Activated B cell treated with CpG ODN at 0.5 μM for 24 hours (primary cell): ENCODE measurements at regions of chr15 and their contacts with region 1.

Region 1: GRCh38 chr15:78195735-78196201 is 38.6 kb downstream of the ACSBG1 start:
- DNase-seq: peak; percentile 59
- ATAC-seq: peak; percentile 90
- H3K4me3 Mint-ChIP-seq: no peak overlapping the region
- H3K27ac Mint-ChIP-seq: no peak overlapping the region
- H3K4me1 Mint-ChIP-seq: no peaks in the 10 kb centered on the region
- H3K27me3 Mint-ChIP-seq: no peaks in the 10 kb centered on the region
- CTCF ChIP-seq: peak; percentile 23

Region 2: DNA sequence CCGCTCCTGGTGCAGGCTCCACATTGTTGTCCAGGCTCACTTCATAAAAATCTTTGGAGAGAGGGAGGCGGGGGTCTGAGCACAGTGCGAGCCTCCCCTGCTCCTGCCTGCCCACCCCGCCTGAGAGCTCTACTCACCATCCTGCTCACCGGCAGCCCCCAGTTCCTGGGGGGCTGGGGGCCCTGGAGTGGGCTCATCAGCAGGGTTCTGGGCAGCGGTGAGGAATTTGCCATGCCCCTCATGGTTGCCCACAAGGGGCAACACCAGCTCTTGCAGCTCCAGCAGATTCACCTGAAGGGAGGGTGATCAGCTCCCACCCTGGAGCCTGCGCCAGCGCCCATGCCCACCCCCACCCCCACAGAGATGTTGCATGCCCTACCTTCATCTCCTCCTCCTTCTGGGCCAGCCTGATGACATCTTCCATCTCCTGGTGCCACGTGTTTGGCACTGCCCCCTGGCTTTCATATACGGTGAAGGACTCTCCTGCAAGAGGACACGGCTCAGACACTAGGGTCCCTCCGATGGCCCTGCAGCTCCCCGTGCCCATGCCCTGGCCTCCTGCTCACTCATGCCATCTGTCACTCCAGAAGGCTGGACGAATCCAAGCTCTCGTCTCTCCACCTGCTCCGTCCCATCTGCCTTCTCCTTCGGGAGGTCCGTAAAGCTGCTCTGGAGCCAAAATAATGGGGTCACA is 280.4 kb before region 1 on chr15:
- CTCF ChIA-PET with region 1: no interaction called
- POLR2A ChIA-PET with region 1: no interaction called
- intact Hi-C with region 1: no loop called
- DNase-seq: no peak
- ATAC-seq: no peak
- H3K4me3 Mint-ChIP-seq: no peak overlapping the region
- H3K27ac Mint-ChIP-seq: no peak overlapping the region
- H3K4me1 Mint-ChIP-seq: no peaks in the 10 kb centered on the region
- H3K27me3 Mint-ChIP-seq: peaks cover 9% of the 10 kb centered on the region
- CTCF ChIP-seq: no peak

Region 3: DNA sequence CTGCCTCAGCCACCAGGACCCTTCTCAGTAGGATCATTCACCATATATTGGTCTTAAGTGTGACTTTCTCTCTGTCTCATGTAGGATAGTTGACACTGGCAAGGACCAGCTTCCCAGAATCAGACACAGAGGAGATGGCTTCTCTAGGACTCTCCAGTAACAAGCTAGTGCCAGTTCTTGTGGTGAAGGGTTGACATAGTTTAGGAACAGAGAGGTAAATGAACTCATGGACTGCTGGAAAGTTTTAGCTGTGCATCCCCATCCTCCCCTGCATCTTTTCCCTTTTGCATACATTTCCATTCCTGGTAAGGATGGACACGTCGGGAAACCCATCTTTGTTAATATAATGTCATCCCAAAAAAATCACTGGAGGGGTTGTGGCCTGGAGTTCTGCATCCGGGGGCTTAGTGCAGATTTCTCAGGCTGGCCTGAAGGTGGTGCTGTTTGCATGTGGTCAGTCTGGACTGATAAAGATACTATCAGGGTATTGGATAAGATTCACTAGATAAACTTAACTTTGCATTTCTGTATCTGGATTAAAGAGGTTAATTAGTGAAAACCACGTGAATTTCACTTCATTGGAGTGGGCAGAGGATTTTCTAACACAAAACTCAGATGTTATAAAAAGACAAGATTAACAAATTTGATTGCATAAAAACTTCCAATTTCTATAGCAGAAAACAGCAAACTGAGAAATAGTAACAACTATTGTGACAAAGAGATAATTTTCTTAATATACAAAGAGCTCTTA is 229.1 kb before region 1 on chr15:
- CTCF ChIA-PET with region 1: interaction called, 4 read pairs
- POLR2A ChIA-PET with region 1: no interaction called
- intact Hi-C with region 1: loop called (anchors 1 kb)
- DNase-seq: no peak
- ATAC-seq: peak; percentile 77
- H3K4me3 Mint-ChIP-seq: no peak overlapping the region
- H3K27ac Mint-ChIP-seq: no peak overlapping the region
- H3K4me1 Mint-ChIP-seq: no peaks in the 10 kb centered on the region
- H3K27me3 Mint-ChIP-seq: peaks cover 8% of the 10 kb centered on the region
- CTCF ChIP-seq: peak; percentile 83

Region 4: GRCh38 chr15:78007911-78008886 is 187.6 kb before region 1 on chr15:
- CTCF ChIA-PET with region 1: no interaction called
- POLR2A ChIA-PET with region 1: no interaction called
- intact Hi-C with region 1: no loop called
- DNase-seq: no peak
- ATAC-seq: no peak
- H3K4me3 Mint-ChIP-seq: no peak overlapping the region
- H3K27ac Mint-ChIP-seq: no peak overlapping the region
- H3K4me1 Mint-ChIP-seq: peaks cover 5% of the 10 kb centered on the region
- H3K27me3 Mint-ChIP-seq: no peaks in the 10 kb centered on the region
- CTCF ChIP-seq: no peak

Region 5: GRCh38 chr15:78131295-78132061 is 64.3 kb before region 1 on chr15 and contains the start of gene CIB2:
- CTCF ChIA-PET with region 1: interaction called, 202 read pairs
- POLR2A ChIA-PET with region 1: interaction called, 28 read pairs
- intact Hi-C with region 1: loop called (anchors 1 kb)
- DNase-seq: peak; percentile 88
- ATAC-seq: peak; percentile 96
- H3K4me3 Mint-ChIP-seq: peak within 1 kb of the TSS; percentile 84
- H3K27ac Mint-ChIP-seq: peak within 1 kb of the TSS; percentile 66
- H3K4me1 Mint-ChIP-seq: peaks cover 16% of the 10 kb centered on the region
- H3K27me3 Mint-ChIP-seq: no peaks in the 10 kb centered on the region
- CTCF ChIP-seq: no peak
- total RNA-seq, gene CIB2: 3.5 and 3.7 TPM in 2 replicates

Region 6: DNA sequence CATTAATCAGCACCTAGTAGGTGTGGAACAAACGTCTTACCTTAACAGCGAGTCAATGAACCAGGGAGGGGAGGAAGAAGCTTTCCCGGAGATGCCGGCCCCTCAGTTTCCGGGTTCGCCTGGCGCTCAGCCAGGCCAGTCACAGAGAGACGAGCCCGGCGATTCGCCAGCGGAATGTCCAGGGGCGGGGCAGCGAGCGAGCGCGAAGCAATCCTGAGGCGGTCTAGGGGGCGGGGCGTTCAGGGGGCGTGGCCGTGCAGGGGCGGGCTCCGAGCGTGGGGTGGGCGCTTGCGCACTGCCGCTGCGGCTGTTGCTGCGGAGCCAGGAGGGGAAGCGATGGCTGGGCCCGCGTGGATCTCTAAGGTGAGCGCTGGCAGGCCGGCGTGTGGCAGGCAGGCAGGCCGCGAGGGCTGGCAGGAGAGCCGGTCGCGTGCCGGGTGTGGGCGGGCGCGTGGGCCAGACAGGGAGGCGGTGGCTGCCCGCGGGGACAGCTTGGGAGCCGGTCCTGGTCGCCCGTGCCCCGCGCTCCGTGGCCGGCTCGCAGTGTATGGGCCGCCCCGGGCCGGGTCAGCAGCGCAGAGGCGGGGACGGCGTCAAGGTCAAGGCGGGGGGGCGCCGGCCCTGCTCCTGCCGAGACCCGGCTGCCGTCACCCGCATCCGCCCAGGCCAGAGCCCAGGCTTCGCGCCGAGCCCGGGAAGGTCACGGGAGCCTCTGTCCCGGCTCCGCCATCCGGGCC is 46.5 kb before region 1 on chr15 and contains the start of gene IDH3A:
- CTCF ChIA-PET with region 1: interaction called, 18 read pairs
- POLR2A ChIA-PET with region 1: interaction called, 13 read pairs
- intact Hi-C with region 1: loop called (anchors 1 kb)
- DNase-seq: peak; percentile 99
- ATAC-seq: peak; percentile 97
- H3K4me3 Mint-ChIP-seq: peak within 1 kb of the TSS; percentile 94
- H3K27ac Mint-ChIP-seq: peak within 1 kb of the TSS; percentile 91
- H3K4me1 Mint-ChIP-seq: peaks cover 46% of the 10 kb centered on the region
- H3K27me3 Mint-ChIP-seq: no peaks in the 10 kb centered on the region
- CTCF ChIP-seq: no peak
- total RNA-seq, gene IDH3A: 111 and 124 TPM in 2 replicates

Region 7: DNA sequence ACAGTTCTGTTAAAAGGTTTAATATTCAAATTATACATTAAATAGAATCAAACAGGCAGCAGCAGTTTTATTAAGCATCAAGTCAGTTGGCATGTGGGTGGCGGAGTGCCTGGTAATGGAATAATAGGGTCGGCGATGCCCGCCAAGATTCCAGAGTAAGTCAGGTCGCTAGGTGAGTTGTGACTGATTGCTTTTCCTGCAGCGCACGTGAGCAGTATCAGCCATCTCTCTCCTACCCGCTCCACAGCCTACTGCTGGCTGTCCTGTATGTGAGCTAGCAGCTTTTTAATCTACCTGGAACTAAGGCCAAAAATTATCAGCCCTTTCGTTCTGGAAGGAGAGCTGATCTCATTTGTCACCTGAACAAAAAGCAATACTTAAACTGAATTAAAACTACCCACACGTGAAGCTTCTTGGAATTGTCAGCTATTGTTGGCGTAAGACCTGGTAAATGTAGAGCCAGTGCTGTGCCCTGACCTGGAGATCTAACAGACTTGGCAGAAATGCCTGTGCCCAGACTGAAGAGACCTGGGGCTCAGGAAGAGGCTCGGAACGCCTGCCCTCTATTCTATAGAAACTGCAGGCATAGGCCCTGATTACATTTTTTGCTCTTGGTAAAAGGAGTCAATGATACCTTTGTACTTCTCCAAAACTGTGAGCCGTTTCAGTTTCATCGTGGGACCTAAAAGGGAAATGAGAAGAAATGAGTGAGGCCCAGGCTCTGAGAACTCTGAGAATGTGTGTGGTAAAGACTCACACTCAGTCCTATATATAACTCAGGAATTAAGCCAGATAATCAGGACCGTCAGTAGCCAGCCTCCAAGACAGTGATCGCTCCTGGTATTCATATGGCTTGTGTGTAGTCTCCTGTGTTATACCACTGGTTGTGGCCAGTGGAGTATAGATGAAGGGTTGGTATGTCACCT is 24.7 kb before region 1 on chr15:
- CTCF ChIA-PET with region 1: interaction called, 37 read pairs
- POLR2A ChIA-PET with region 1: interaction called, 6 read pairs
- intact Hi-C with region 1: loop called (anchors 2 kb)
- DNase-seq: no peak
- ATAC-seq: peak; percentile 73
- H3K4me3 Mint-ChIP-seq: peak overlapping the region; percentile 77
- H3K27ac Mint-ChIP-seq: peak overlapping the region; percentile 95
- H3K4me1 Mint-ChIP-seq: peaks cover 92% of the 10 kb centered on the region
- H3K27me3 Mint-ChIP-seq: no peaks in the 10 kb centered on the region
- CTCF ChIP-seq: no peak

Region 8: DNA sequence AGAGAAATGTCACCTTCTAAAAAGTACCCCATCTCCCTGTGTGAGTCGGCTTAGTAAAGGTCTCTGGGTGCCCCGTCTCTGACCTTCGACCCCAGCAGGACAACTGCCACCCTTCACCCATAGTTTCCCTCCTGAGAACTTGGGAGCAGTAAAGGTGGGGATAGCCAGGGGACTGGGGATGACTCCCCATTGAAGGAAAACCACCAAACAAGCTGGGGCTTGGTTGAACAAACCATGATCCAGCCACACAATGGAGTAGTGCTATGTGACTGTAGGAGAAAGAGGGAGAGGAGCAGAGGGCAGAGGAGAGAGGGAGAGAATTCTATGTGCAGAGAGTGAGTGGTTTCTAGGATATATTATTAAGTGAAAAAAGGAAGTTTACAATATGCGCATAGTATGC is 12.9 kb before region 1 on chr15:
- CTCF ChIA-PET with region 1: interaction called, 37 read pairs
- POLR2A ChIA-PET with region 1: no interaction called
- intact Hi-C with region 1: no loop called
- DNase-seq: no peak
- ATAC-seq: no peak
- H3K4me3 Mint-ChIP-seq: no peak overlapping the region
- H3K27ac Mint-ChIP-seq: no peak overlapping the region
- H3K4me1 Mint-ChIP-seq: no peaks in the 10 kb centered on the region
- H3K27me3 Mint-ChIP-seq: peaks cover 6% of the 10 kb centered on the region
- CTCF ChIP-seq: no peak